ENCODE measurements at regions of chr1 and their contacts with region 1.

Region 1: GRCh38 chr1:172719694-172720138 is 60.8 kb downstream of the FASLG start:
- H3K4me3 ChIP-seq: no peak overlapping the region
- H3K27ac ChIP-seq: no peak overlapping the region
- H3K4me1 ChIP-seq: no peaks in the 10 kb centered on the region
- CTCF ChIP-seq: peak; percentile 39; the same call in 1 of the 2 replicates

Region 2: DNA sequence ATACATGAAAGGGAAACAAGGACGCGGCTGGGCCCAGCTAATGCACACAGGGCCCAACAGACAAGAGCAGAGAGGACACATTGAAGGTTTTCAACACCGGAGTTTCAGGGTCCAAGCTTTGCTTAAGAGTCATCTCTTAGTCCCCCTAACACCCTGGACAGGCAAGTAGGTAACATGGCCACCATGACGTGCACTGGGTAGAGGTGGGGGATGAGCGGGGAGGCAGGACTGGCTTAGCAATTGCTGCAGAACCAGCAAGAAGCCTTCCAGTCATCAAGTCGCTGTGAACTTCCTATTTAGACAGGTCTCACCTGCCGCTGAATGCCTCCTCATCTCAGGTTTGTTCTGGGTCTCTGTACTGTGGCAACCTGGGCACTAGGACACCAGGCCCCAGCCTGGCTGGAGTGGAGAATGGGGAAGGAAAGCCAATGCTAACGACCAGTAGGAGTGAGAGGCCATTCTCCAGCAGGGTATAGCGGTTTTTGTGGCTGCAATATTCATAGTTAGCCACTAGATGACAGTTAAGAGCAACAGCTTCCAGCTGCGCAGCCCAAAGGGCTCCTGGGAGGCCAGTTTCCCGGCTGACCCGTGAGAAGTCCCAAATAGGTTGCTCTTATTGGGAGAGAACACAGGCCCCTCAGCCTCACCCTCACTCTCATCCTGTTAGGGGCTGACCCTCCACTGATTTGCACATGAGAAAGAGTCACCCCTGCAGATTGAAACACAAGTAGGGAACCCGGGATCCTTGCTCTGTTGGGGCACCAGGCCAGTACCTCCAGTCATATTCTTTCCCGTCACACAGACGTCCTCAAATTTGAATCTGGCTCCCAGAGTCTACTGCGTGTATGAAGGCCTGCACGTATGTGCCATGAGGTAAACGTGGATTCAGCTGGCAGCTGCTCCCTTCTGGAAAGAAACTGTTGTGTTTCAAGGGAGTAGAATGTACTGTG is 269.9 kb before region 1 on chr1:
- CTCF ChIA-PET with region 1: interaction called, 11 read pairs
- POLR2A ChIA-PET with region 1: no interaction called
- H3K4me3 ChIP-seq: no peak overlapping the region
- H3K27ac ChIP-seq: no peak overlapping the region; the same call in 1 of the 2 replicates
- H3K4me1 ChIP-seq: peaks cover 8% of the 10 kb centered on the region
- CTCF ChIP-seq: peak; percentile 57; the same call in 1 of the 2 replicates

Region 3: DNA sequence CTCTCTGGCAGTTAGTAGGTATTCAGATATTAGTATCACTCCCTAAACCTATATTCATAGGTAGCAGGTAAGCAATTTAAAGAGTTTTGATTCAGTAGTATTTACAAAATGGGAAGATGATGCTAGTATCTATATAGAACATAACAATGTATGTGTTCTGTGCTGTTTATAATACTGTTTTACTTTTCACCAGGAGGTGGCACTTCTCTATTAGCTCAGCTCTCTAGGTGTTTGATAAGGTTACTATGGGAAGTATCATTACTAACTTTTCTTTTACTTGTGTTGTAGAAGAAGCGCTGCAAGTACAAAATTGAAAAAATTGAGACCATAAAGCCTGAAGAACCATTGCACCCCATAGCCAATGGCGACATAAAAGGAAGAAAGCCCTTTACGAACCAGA is 110.2 kb before region 1 on chr1:
- CTCF ChIA-PET with region 1: interaction called, 15 read pairs
- POLR2A ChIA-PET with region 1: no interaction called
- H3K4me3 ChIP-seq: no peak overlapping the region
- H3K27ac ChIP-seq: no peak overlapping the region
- H3K4me1 ChIP-seq: peaks cover 5% of the 10 kb centered on the region; the same call in 1 of the 2 replicates
- CTCF ChIP-seq: no peak

Region 4: DNA sequence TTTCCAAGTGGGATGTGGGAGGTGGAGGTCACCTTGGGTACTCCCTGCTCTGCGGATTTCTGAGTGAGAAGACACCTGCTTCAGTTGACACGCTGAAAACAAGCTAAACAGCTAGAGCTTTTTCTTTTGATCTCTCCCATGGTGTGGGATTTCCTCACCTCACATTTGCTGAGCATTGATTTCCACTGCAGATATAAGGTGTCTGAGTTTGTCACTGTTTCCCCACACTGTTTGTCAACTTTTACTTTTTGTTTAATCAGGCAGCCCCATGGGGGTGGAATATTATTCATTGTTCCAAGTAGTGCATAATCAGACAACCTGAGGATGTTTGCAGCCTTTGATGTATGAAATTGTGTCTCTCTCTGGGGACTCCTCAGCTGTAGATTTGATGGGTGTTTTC is 11.3 kb before region 1 on chr1:
- CTCF ChIA-PET with region 1: interaction called, 11 read pairs
- POLR2A ChIA-PET with region 1: no interaction called
- H3K4me3 ChIP-seq: no peak overlapping the region
- H3K27ac ChIP-seq: no peak overlapping the region
- H3K4me1 ChIP-seq: no peaks in the 10 kb centered on the region
- CTCF ChIP-seq: no peak

Region 5: DNA sequence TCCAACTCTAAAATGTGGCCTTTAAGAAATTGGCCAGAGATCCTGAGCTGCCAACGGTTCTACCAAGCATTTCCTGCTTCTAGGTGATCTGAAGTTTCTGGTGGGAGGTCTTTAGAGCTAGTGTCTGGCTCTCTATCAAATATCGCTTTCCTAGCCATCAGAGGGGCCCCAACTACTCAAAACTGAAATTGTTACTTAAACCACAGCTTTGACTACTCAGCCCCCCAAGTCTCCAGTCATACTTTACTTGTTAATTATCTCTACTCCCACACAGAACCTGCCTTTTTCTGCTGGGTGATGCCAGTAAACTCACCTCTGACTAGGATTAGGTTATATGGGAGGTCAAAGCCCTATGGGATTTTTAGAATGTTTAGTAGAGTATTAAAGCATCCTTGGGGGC is 34.2 kb after region 1 on chr1:
- CTCF ChIA-PET with region 1: no interaction called
- POLR2A ChIA-PET with region 1: no interaction called
- H3K4me3 ChIP-seq: no peak overlapping the region
- H3K27ac ChIP-seq: no peak overlapping the region
- H3K4me1 ChIP-seq: no peaks in the 10 kb centered on the region
- CTCF ChIP-seq: no peak

Region 6: DNA sequence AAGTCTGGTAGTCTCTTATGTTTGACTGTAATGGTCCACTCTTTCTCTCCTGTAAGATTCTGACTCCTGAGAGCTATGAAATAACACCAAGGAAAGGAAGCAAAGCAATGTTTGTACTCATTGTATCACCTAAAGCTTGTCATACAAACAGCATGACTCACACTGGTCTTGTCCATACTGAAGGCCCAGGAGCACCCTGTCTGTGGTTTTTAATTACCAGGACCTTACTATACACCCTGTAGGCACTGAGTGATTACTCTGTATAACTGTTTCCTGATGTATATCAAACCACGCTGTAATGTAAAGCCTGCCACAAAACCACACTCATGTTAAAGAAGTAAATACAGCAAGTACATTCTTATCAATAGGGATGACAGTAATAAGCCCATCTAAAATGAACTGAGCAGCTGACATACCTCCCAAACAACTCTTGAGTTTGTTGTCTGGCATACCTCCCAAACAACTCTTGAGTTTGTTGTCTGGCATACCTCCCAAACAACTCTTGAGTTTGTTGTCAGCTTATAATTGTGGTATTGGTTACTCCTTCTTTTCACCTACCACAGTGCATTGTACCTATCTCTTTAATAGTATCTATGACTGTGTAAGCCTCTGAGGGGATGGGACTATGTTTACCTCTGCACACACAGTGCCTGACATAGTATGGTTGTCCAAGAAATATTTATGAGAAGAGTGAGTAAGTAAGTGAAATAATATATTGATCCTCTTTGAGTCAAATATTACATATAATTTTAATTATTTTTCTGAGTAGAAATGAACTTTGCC is 342.6 kb after region 1 on chr1:
- CTCF ChIA-PET with region 1: no interaction called
- POLR2A ChIA-PET with region 1: no interaction called
- H3K4me3 ChIP-seq: no peak overlapping the region
- H3K27ac ChIP-seq: no peak overlapping the region
- H3K4me1 ChIP-seq: no peaks in the 10 kb centered on the region
- CTCF ChIP-seq: no peak

Measured in HEK293 (cell line).